ENCODE measurements at regions of chr14 and their contacts with region 1.

Region 1: GRCh38 chr14:50311975-50312733 is at the starts of genes DMAC2L and L2HGDH:
- DNase-seq: peak; percentile 92
- H3K4me3 Mint-ChIP-seq: peak within 1 kb of the TSS; percentile 92
- H3K27ac Mint-ChIP-seq: peak within 1 kb of the TSS; percentile 99
- H3K4me1 Mint-ChIP-seq: peaks cover 46% of the 10 kb centered on the region
- H3K27me3 Mint-ChIP-seq: peaks cover 2% of the 10 kb centered on the region
- total RNA-seq, gene DMAC2L: 14.4 and 17.9 TPM in 2 replicates
- total RNA-seq, gene L2HGDH: 14.7 and 16.2 TPM in 2 replicates

Region 2: GRCh38 chr14:49692811-49693734 is 619.1 kb before region 1 on chr14 and contains the start of gene KLHDC1:
- intact Hi-C with region 1: loop called (anchors 5 kb)
- DNase-seq: peak; percentile 74
- H3K4me3 Mint-ChIP-seq: peak within 1 kb of the TSS; percentile 87
- H3K27ac Mint-ChIP-seq: peak within 1 kb of the TSS; percentile 94
- H3K4me1 Mint-ChIP-seq: peaks cover 19% of the 10 kb centered on the region
- H3K27me3 Mint-ChIP-seq: peaks cover 1% of the 10 kb centered on the region
- total RNA-seq, gene KLHDC1: 0.93 and 1.9 TPM in 2 replicates

Region 3: GRCh38 chr14:49867831-49868723 is 444.1 kb before region 1 on chr14:
- intact Hi-C with region 1: loop called (anchors 1 kb)
- DNase-seq: peak; percentile 92
- H3K4me3 Mint-ChIP-seq: peak overlapping the region; percentile 93
- H3K27ac Mint-ChIP-seq: peak overlapping the region; percentile 97
- H3K4me1 Mint-ChIP-seq: peaks cover 20% of the 10 kb centered on the region
- H3K27me3 Mint-ChIP-seq: no peaks in the 10 kb centered on the region

Region 4: GRCh38 chr14:50344116-50344775 is 32.1 kb after region 1 on chr14:
- intact Hi-C with region 1: loop called (anchors 2 kb)
- DNase-seq: peak; percentile 47
- H3K4me3 Mint-ChIP-seq: peak overlapping the region; percentile 30
- H3K27ac Mint-ChIP-seq: peak overlapping the region; percentile 69
- H3K4me1 Mint-ChIP-seq: peaks cover 32% of the 10 kb centered on the region
- H3K27me3 Mint-ChIP-seq: peaks cover 18% of the 10 kb centered on the region

Region 5: GRCh38 chr14:50532502-50533240 is 220.5 kb after region 1 on chr14 and contains the start of gene MAP4K5:
- intact Hi-C with region 1: loop called (anchors 1 kb)
- DNase-seq: peak; percentile 82
- H3K4me3 Mint-ChIP-seq: peak within 1 kb of the TSS; percentile 92
- H3K27ac Mint-ChIP-seq: peak within 1 kb of the TSS; percentile 79
- H3K4me1 Mint-ChIP-seq: peaks cover 42% of the 10 kb centered on the region
- H3K27me3 Mint-ChIP-seq: peaks cover 24% of the 10 kb centered on the region
- total RNA-seq, gene MAP4K5: 26.4 and 27.5 TPM in 2 replicates

Measured in activated T-helper 1 cell treated with anti-CD3 and anti-CD28 coated beads, Interleukin-12 subunit alpha, Interleukin-12 subunit beta, Interleukin-2, Interleukin-4 antibody, amounts not matched to agents 30 ng/mL and 10 ng/mL and 1 ng/mL, durations not matched to agents 14 hours and 24 hours and 36 hours (primary cell).